ENCODE measurements at regions of chr18 and their contacts with region 1.

Region 1: GRCh38 chr18:14933049-14933851 is 185.3 kb downstream of the ANKRD30B start:
- DNase-seq: peak; percentile 34
- H3K4me3 ChIP-seq: no peak overlapping the region
- H3K27ac ChIP-seq: peak overlapping the region; percentile 3
- H3K4me1 ChIP-seq: peaks cover 18% of the 10 kb centered on the region
- H3K27me3 ChIP-seq: no peaks in the 10 kb centered on the region
- CTCF ChIP-seq: no peak

Region 2: DNA sequence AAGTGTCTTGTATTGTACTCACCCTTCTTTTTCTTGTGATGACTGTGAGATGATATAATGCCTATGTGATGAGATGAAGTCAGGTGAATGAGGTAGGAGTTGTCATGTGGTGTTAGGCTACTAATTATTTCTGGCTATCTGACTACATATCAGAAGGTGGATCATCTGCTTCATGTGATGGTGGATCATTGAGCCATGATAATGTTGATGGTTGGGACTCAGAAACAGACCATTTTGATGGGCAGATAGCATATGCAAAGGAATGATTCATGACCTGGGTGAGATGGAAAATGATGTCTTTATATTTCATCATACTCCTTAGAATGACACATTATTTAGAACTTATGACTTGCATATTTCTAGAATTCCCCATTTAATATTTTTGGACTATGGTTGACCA is 165.8 kb before region 1 on chr18:
- intact Hi-C with region 1: no loop called
- DNase-seq: no peak
- H3K4me3 ChIP-seq: no peak overlapping the region
- H3K27ac ChIP-seq: no peak overlapping the region
- H3K4me1 ChIP-seq: no peaks in the 10 kb centered on the region
- H3K27me3 ChIP-seq: no peaks in the 10 kb centered on the region
- CTCF ChIP-seq: no peak

Region 3: GRCh38 chr18:14919666-14920065 is 13.6 kb before region 1 on chr18:
- intact Hi-C with region 1: loop called (anchors 2 kb)
- DNase-seq: peak; percentile 74
- H3K4me3 ChIP-seq: no peak overlapping the region
- H3K27ac ChIP-seq: peak overlapping the region; percentile 78
- H3K4me1 ChIP-seq: no peaks in the 10 kb centered on the region
- H3K27me3 ChIP-seq: no peaks in the 10 kb centered on the region
- CTCF ChIP-seq: no peak